ENCODE measurements at regions of chr9 and their contacts with region 1.

Region 1: GRCh38 chr9:126791406-126792151 is 13.3 kb upstream of the ZBTB43 start:
- H3K4me3 ChIP-seq: no peak overlapping the region
- H3K27ac ChIP-seq: no peak overlapping the region
- H3K4me1 ChIP-seq: no peaks in the 10 kb centered on the region; the same call in 1 of the 2 replicates
- CTCF ChIP-seq: no peak

Region 2: DNA sequence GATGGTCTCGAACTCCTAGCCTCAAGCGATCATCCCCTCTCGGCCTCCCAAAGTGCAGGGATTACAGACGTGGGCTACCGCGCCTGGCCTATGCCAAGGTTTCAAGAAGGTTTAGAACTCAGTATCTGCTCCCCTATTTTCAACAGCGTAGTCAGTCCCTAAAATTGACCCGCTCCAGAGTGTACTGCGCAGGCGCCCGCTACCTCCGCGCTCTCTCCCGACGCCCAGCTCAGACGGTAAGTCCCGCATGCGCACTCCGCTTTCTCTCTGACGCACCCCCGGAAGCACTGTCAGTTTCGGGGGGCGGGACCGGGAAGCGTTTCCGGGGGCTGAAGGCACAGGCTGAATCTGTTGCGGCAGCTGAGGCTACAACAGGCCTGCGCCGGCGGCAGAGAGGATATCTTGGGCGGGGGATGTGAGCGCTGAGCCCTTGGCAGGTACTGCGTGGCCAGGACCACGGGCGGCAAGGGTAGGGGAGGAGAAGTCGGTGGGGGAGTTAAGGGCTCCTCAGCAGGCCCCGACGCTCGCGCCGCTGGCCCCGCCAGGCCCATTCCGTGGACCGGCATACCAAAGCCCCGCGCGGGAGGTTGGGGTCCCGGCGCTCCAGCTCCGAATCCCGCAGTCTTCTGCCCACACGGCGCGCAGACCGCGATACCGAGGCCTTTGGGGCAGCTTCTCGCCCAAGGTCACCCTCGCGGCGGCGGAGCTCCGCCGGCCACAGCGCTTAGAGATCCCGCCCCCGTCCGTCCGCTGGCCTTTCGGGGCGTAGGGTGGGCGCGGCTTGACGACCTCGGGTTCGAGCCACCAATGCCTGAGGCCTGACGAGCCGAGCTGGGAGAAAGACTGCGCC is 13.3 kb after region 1 on chr9 and contains the start of gene ZBTB43:
- CTCF ChIA-PET with region 1: interaction called, 5 read pairs
- POLR2A ChIA-PET with region 1: interaction called, 16 read pairs
- H3K4me3 ChIP-seq: peak within 1 kb of the TSS; percentile 95
- H3K27ac ChIP-seq: peak within 1 kb of the TSS; percentile 79
- H3K4me1 ChIP-seq: peaks cover 7% of the 10 kb centered on the region; the same call in 1 of the 2 replicates
- CTCF ChIP-seq: no peak

Region 3: DNA sequence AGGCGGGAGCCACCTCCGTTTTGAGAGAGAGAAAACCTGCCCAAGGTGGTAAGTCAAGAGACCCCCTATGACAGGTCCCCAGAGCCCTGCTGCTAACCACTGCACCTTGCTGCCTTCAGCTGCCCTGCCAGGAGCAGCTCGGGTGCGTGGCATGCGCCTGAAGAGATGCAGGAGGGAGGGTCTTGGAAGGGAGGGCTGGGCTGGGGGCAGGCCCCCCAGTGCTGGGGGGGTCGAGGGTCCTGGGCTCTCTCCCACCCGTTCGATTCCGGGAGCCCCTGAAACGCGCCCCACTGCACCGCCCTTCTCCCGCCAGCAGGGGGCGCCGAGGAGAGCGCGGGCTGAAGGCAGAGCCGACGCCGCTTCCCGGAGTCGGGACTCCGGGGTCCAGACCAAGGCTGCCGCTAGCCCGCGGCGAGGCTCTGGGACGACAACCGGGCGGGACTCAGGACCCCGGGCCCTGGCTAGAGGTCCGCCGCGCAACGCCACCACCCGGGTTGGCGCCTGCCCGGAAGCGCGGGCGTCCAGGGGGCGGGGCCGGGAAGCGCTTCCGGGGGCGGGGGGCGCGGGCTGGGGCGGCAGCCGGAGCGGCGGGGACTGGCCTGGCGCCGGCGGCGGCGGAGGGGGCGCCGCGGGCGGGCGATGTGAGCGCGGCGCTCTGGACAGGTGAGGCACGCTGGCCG is 68.6 kb after region 1 on chr9 and contains the start of gene ZBTB34:
- CTCF ChIA-PET with region 1: no interaction called
- POLR2A ChIA-PET with region 1: no interaction called
- H3K4me3 ChIP-seq: peak within 1 kb of the TSS; percentile 92
- H3K27ac ChIP-seq: peak within 1 kb of the TSS; percentile 81
- H3K4me1 ChIP-seq: peaks cover 3% of the 10 kb centered on the region; the same call in 1 of the 2 replicates
- CTCF ChIP-seq: peak; percentile 95

Measured in HEK293 (cell line).